Endothelial cell of umbilical vein (primary cell): ENCODE measurements at regions of chr1 and their contacts with region 1.

Region 1: GRCh38 chr1:172002725-172003345 is 161.5 kb downstream of the DNM3 start:
- DNase-seq: peak; percentile 74
- H3K4me3 ChIP-seq: no peak overlapping the region
- H3K27ac ChIP-seq: no peak overlapping the region
- H3K4me1 ChIP-seq: peaks cover 8% of the 10 kb centered on the region
- H3K27me3 ChIP-seq: no peaks in the 10 kb centered on the region
- CTCF ChIP-seq: peak; percentile 46 to 58
- POLR2A ChIP-seq: no peak

Region 2: GRCh38 chr1:172019976-172020375 is 17.1 kb after region 1 on chr1:
- CTCF ChIA-PET with region 1: interaction called, 24 read pairs
- POLR2A ChIA-PET with region 1: no interaction called
- dilution Hi-C with region 1: no loop called
- intact Hi-C with region 1: no loop called
- DNase-seq: no peak
- H3K4me3 ChIP-seq: no peak overlapping the region
- H3K27ac ChIP-seq: no peak overlapping the region
- H3K4me1 ChIP-seq: no peaks in the 10 kb centered on the region
- H3K27me3 ChIP-seq: no peaks in the 10 kb centered on the region
- CTCF ChIP-seq: no peak
- POLR2A ChIP-seq: no peak

Region 3: GRCh38 chr1:172109359-172109758 is 106.5 kb after region 1 on chr1:
- CTCF ChIA-PET with region 1: interaction called, 12 read pairs
- POLR2A ChIA-PET with region 1: no interaction called
- dilution Hi-C with region 1: no loop called
- intact Hi-C with region 1: no loop called
- DNase-seq: peak; percentile 66
- H3K4me3 ChIP-seq: no peak overlapping the region
- H3K27ac ChIP-seq: peak overlapping the region; percentile 28
- H3K4me1 ChIP-seq: peaks cover 48% of the 10 kb centered on the region
- H3K27me3 ChIP-seq: no peaks in the 10 kb centered on the region
- CTCF ChIP-seq: no peak
- POLR2A ChIP-seq: no peak

Region 4: GRCh38 chr1:172322219-172323061 is 319.6 kb after region 1 on chr1:
- CTCF ChIA-PET with region 1: interaction called, 18 read pairs
- POLR2A ChIA-PET with region 1: no interaction called
- dilution Hi-C with region 1: no loop called
- intact Hi-C with region 1: loop called (anchors 2 kb)
- DNase-seq: peak; percentile 96
- H3K4me3 ChIP-seq: peak overlapping the region in 1 of 3 experiments; percentile 37
- H3K27ac ChIP-seq: peak overlapping the region; percentile 78
- H3K4me1 ChIP-seq: peaks cover 36% of the 10 kb centered on the region
- H3K27me3 ChIP-seq: no peaks in the 10 kb centered on the region
- CTCF ChIP-seq: no peak
- POLR2A ChIP-seq: no peak

Region 5: DNA sequence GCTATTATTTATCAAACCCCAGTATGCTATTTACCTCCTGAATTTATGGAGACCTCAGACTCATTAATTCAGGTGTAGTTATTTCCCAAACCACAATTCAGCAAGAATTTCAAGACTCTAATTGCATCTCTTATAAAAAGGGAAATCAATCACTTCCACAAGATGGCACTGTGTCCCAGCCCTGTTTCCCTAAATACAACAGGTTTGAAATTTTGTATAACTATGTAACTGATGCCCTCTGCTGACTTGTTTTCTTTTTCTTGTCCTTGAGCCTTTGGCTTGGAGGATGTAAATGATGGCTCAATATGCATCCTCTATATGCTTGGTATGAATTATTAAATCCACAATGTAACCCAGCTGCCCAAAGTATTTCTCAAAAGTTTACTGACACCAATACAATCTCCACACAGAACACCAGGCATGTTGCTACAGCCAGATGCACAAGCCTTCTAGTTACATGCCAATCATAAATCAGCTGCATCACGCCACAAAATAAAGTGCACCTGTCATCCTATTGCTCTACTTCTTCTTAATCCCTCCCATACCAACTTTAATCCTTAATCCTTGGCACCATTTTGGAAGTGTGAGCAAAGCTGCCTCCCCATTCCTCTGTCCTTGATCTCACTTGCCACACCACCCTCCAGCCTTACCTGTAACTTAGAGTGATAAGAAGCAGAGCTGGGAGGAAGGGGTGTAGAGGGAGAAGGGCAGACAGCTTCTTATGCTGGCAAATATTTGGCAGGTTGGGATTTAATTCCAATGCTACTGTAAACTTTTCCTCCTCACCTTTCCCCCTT is 426.7 kb after region 1 on chr1:
- CTCF ChIA-PET with region 1: interaction called, 53 read pairs
- POLR2A ChIA-PET with region 1: no interaction called
- dilution Hi-C with region 1: loop called (anchors 25 kb)
- intact Hi-C with region 1: loop called (anchors 1 kb)
- DNase-seq: peak; percentile 78
- H3K4me3 ChIP-seq: no peak overlapping the region
- H3K27ac ChIP-seq: no peak overlapping the region
- H3K4me1 ChIP-seq: no peaks in the 10 kb centered on the region
- H3K27me3 ChIP-seq: no peaks in the 10 kb centered on the region
- CTCF ChIP-seq: peak; percentile 47 to 64
- POLR2A ChIP-seq: no peak

Region 6: GRCh38 chr1:172719694-172720138 is 716.9 kb after region 1 on chr1:
- CTCF ChIA-PET with region 1: interaction called, 21 read pairs
- POLR2A ChIA-PET with region 1: no interaction called
- dilution Hi-C with region 1: no loop called
- intact Hi-C with region 1: loop called (anchors 1 kb)
- DNase-seq: peak; percentile 70
- H3K4me3 ChIP-seq: no peak overlapping the region
- H3K27ac ChIP-seq: no peak overlapping the region
- H3K4me1 ChIP-seq: no peaks in the 10 kb centered on the region
- H3K27me3 ChIP-seq: no peaks in the 10 kb centered on the region
- CTCF ChIP-seq: peak; percentile 53 to 64
- POLR2A ChIP-seq: no peak